ENCODE measurements at regions of chr6 and their contacts with region 1.

Region 1: GRCh38 chr6:138428944-138429598 is 25.0 kb downstream of the HEBP2 start:
- DNase-seq: no peak

Region 2: GRCh38 chr6:138465007-138465645 is 36.1 kb after region 1 on chr6:
- intact Hi-C with region 1: no loop called
- DNase-seq: no peak

Region 3: DNA sequence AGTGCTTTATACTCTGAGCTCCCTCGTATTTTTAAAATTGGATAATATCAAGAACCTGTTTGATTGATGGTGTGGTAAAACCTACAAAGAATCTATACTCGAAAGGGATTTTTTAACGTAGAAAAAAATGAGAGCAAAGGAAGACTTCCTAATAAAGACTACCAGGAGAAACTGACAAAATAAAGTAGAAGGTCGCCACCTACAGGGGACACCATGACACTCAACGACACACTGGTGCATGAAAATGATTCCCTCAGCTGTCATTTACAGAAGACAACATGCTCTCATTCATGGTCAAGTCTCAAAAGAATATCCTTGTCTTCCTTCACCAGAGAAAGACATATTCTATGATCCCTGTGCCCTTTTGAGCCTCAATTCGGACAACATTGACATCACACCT is 80.3 kb after region 1 on chr6:
- intact Hi-C with region 1: loop called (anchors 2 kb)
- DNase-seq: peak in 5 of 10 donors; percentile 37 to 89 (median 48)

Region 4: GRCh38 chr6:138588805-138589434 is 159.8 kb after region 1 on chr6:
- intact Hi-C with region 1: loop called (anchors 1 kb)
- DNase-seq: peak in 5 of 10 donors; percentile 39 to 63 (median 53)

Region 5: GRCh38 chr6:138773177-138774091 is 344.4 kb after region 1 on chr6 and contains the start of gene CCDC28A:
- intact Hi-C with region 1: loop called (anchors 5 kb)
- DNase-seq: peak; percentile 87 to 98 (median 94)